RWPE1 (cell line): ENCODE measurements at regions of chr17 and their contacts with region 1.

Region 1: GRCh38 chr17:29043539-29044145 is 701 bp downstream of the PIPOX start:
- DNase-seq: no peak
- H3K27ac ChIP-seq: no peak overlapping the region
- CTCF ChIP-seq: no peak

Region 2: DNA sequence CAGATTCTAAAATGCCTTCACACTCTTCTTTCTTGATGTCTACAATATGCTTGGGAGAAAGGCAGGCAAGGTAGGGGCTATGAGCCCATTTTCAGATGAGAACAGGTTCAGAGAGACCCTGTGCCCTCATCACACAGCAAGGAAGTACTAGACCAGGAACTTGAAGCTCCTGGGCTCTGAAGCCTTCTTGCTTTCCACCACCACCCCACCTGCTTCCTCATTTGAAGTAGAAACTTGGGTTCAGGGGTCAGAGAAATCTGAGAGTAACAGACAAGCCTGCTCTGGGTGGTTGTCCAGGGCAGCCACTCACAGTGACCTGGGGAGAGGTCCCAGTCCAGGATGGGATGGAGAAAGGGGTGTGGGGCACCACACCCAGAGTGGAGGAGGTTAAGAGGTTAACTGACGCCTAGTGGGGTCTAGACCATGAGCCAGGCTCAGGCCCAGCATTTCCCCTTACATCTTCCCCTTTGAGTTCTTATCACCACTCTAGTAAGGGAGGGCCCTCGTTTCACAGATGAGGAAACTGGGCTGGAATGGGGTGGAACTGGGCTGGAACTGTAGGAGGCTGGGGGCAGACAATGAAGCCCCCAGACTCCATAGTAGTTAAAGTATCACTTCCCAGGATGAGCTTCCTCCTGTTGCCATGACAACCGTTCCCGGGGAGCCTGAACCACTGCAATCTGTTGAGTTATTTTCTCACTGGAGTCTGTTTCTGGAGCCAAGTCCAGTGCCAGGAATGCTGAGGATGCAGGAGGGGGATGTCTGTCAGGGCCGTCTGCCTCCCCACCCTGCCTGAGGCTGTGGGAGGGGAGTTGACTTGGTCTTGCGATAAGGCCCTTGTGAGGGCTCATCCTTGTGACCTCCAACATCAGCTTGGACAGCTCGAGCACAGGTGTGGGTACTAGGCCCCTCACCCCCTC is 76.2 kb before region 1 on chr17:
- CTCF ChIA-PET with region 1: no interaction called
- POLR2A ChIA-PET with region 1: no interaction called
- DNase-seq: no peak
- H3K27ac ChIP-seq: no peak overlapping the region
- CTCF ChIP-seq: no peak

Region 3: DNA sequence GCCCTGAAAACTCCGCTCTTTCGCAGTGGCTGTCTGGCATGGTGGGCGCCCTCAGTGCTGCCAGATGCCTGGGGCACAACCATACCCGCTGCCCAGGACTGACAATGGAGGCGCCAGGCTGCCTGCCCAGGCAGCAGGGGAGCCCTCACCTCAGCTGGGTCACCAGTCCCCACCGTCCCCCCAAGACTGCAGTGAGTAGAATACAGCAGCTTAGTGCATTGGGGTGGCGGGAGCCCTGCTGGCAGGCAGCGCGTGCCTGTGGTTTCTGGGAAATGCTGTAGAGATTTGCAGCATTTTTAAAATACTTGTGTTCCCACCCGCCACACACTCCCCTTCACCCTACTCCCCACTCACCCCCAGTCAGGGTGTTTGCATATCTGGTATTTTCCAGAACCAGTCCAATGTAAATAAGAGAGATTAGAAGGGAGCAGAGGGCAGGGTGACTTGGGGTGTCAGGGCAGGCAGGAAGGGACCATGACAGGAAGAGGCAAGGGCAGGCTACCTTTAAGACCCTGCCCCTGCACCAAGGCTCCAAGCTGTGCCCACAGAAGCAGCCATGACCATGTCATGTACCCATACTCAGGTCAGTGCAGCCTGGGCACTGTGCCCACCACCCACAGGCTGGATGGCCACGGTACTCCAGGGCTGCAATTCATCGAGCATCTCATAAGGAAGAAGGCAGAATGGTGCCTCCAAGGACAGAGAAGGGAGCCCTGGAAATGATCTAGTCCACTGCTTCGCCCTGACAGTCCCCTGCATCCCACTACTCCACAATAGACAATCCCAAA is 115.0 kb after region 1 on chr17:
- CTCF ChIA-PET with region 1: no interaction called
- POLR2A ChIA-PET with region 1: interaction called, 10 read pairs
- DNase-seq: no peak
- H3K27ac ChIP-seq: peak overlapping the region; percentile 97
- CTCF ChIP-seq: no peak